Heart right ventricle (tissue), 16 donors: ENCODE measurements at regions of chr2 and their contacts with region 1.

Region 1: GRCh38 chr2:236569573-236569973 is at the start of gene ACKR3:
- DNase-seq: peak; percentile 75 to 86
- ATAC-seq: peak; percentile 66 to 89 (median 84)
- H3K4me3 ChIP-seq: peak within 1 kb of the TSS; percentile 38 to 73 (median 60)
- H3K27ac ChIP-seq: peak within 1 kb of the TSS; percentile 17 to 98 (median 94)
- H3K4me1 ChIP-seq: peaks cover 4 to 75% (median 53%) of the 10 kb centered on the region in 9 donors
- H3K27me3 ChIP-seq: peaks cover 0 to 6% (median 0%) of the 10 kb centered on the region in 7 donors
- CTCF ChIP-seq: peak in 8 of 9 donors; percentile 14 to 69 (median 47)
- total RNA-seq, gene ACKR3: 17.7 to 102 (median 49.3) TPM

Region 2: GRCh38 chr2:236359426-236360045 is 210.0 kb before region 1 on chr2:
- intact Hi-C with region 1: loop called in 6 of 10 experiments (anchors 5 to 10 kb)
- DNase-seq: no peak
- ATAC-seq: no peak
- H3K4me3 ChIP-seq: no peak overlapping the region
- H3K27ac ChIP-seq: no peak overlapping the region
- H3K4me1 ChIP-seq: peaks cover 0 to 8% (median 0%) of the 10 kb centered on the region in 9 donors
- H3K27me3 ChIP-seq: no peaks in the 10 kb centered on the region
- CTCF ChIP-seq: no peak

Region 3: GRCh38 chr2:236512902-236513435 is 56.6 kb before region 1 on chr2:
- intact Hi-C with region 1: loop called (anchors 1 to 10 kb)
- DNase-seq: peak; percentile 62 to 72
- ATAC-seq: peak; percentile 72 to 92 (median 88)
- H3K4me3 ChIP-seq: no peak overlapping the region
- H3K27ac ChIP-seq: peak overlapping the region in 2 of 10 donors; percentile 3 to 48
- H3K4me1 ChIP-seq: peaks cover 0 to 20% (median 7%) of the 10 kb centered on the region in 9 donors
- H3K27me3 ChIP-seq: peaks cover 0 to 9% (median under 1%) of the 10 kb centered on the region in 7 donors
- CTCF ChIP-seq: peak; percentile 74 to 90 (median 89)

Region 4: GRCh38 chr2:236642584-236643291 is 73.2 kb after region 1 on chr2:
- intact Hi-C with region 1: loop called in 1 of 10 experiments (anchors 5 kb)
- DNase-seq: peak; percentile 74 to 88
- ATAC-seq: peak; percentile 87 to 95 (median 92)
- H3K4me3 ChIP-seq: no peak overlapping the region
- H3K27ac ChIP-seq: peak overlapping the region in 9 of 10 donors; percentile 20 to 83 (median 61)
- H3K4me1 ChIP-seq: peaks cover 0 to 25% (median 7%) of the 10 kb centered on the region in 9 donors
- H3K27me3 ChIP-seq: no peaks in the 10 kb centered on the region
- CTCF ChIP-seq: no peak

Region 5: DNA sequence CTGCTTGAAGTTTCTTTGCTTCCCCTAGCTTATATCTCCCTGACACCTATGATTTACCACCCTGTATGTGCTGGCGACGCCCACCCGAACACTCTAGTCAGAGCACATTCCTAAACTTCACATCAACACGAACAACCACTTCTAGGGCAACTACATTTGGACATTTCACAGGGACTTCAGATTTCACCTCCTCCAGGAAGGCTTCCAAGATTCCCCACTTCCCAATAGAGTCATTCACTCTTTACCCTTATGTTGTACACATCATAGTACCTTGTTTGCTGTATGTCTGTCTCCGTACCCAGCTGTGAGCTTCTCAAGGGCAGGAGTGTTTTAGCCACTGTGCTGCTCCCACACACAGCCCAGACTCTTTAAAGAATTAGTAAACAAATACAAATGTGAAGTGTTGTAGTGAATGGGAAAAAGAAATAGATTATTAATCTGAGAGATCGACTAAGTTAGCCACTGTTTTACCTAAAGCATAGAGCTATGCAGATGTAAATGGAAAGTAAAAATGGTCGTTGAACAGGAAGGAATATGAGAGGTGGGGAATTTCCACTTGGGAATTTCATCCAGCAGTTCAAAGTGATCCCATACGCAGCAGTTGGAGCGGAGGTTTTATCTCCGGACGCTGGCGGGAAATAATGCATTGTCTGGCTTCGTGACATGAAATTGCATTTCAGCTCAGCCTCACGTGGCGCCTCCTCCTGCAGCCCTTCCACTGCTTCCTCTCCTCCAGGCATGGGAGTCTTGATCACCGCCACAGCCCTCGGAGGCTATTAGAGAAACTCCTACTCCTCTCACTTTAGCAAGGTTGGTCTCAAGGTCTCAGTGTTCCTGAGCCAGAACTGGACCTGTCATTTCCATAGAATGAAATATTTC is 282.8 kb after region 1 on chr2:
- intact Hi-C with region 1: loop called in 1 of 10 experiments (anchors 10 kb)
- DNase-seq: peak in 1 of 2 donors; percentile 40
- ATAC-seq: peak in 7 of 8 donors; percentile 12 to 77 (median 32)
- H3K4me3 ChIP-seq: no peak overlapping the region
- H3K27ac ChIP-seq: peak overlapping the region in 4 of 10 donors; percentile 42 to 64 (median 50)
- H3K4me1 ChIP-seq: peaks cover 0 to 17% (median 11%) of the 10 kb centered on the region in 9 donors
- H3K27me3 ChIP-seq: no peaks in the 10 kb centered on the region
- CTCF ChIP-seq: no peak